MCF 10A (cell line): ENCODE measurements at regions of chr12 and their contacts with region 1.

Region 1: DNA sequence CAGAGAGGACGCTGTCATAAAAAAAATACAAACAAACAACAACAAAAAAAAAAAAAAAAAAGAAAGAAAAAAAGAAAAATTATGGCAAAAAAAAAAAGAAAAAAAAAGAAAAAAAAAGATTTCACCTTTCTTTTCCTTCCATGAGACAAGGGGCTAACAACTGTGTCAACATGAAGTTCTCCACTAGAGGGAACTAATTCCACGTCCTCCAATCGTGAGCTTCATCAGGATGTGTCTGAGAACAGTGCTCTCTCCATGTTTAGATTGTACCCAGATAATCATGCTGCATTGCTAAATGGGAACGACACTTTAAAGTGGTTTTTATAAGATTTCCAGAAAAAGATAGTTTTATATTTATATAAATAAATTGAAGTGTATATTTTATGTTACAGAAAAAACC is 96.2 kb upstream of the PTPRB start:
- DNase-seq: peak; percentile 80
- H3K4me3 Mint-ChIP-seq: no peak overlapping the region
- H3K27ac Mint-ChIP-seq: no peak overlapping the region
- H3K4me1 Mint-ChIP-seq: no peaks in the 10 kb centered on the region
- H3K27me3 Mint-ChIP-seq: no peaks in the 10 kb centered on the region
- CTCF ChIP-seq: peak; percentile 80

Region 2: DNA sequence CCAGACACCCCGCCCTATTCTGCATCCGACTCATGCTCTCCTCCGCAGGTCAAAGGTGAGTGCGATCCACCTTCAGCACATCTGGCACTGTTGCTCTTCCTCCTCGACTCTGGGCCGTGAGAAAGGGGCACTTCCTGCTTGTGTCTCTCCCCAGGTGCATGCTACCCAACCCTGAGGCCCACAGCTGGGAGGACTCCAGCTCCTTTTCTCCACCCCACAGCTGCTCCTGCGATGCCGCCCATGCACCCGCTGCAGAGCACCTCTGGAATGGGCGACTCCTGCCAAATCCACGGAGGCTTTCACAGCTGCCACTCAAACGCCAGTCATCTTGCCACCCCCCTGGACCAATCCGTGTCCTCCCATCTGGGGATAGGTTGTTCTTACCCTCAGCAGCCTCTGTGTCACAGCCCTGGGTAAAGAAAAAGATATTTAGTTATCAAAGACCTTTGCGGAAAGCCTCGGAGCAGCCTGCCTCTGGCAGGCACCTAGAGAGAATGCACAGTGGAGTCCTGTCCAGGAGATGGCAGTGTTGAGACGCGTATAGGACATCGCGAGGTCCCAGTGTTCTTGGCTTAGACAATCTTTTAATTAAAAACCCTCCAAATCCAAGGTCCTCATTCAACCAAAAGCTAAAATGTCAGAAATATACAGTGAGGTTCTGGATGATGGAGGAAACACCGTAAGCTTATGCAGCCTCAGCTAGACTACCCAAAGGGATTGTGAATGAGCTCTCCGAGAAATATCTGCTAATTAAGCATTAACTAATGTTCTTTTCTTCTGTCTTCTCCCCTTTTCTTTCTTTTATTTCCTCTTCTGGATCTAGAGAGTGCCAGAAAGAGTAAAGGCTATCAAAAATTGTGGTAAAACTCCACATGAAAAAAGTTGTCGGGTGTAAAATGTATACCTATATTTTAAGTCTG is 854.1 kb before region 1 on chr12:
- CTCF ChIA-PET with region 1: interaction called, 25 read pairs
- POLR2A ChIA-PET with region 1: interaction called, 3 read pairs
- intact Hi-C with region 1: loop called (anchors 1 kb)
- DNase-seq: peak; percentile 83
- H3K4me3 Mint-ChIP-seq: peak overlapping the region; percentile 60
- H3K27ac Mint-ChIP-seq: no peak overlapping the region
- H3K4me1 Mint-ChIP-seq: peaks cover 7% of the 10 kb centered on the region
- H3K27me3 Mint-ChIP-seq: no peaks in the 10 kb centered on the region
- CTCF ChIP-seq: peak; percentile 94

Region 3: DNA sequence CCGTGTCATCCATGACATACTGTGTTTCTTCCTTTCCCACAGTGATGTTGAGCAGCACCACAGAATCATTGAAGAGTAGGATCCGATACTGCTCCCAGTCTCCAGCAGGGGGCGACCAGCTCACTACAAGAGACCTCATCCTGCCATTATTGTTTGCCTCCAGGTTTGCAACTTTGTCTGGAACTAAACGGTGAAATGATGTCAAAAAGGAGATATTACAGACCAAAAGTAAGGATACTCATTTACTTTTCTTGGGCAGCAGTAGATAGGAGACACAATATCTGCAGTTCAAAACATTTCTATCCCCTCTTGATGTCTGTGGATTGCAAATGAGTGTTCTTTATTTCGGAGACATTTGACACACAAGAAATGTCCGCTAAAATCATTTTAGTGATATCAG is 143.3 kb before region 1 on chr12:
- CTCF ChIA-PET with region 1: interaction called, 23 read pairs
- POLR2A ChIA-PET with region 1: no interaction called
- intact Hi-C with region 1: loop called (anchors 1 kb)
- DNase-seq: peak; percentile 83
- H3K4me3 Mint-ChIP-seq: no peak overlapping the region
- H3K27ac Mint-ChIP-seq: no peak overlapping the region
- H3K4me1 Mint-ChIP-seq: no peaks in the 10 kb centered on the region
- H3K27me3 Mint-ChIP-seq: no peaks in the 10 kb centered on the region
- CTCF ChIP-seq: peak; percentile 78

Region 4: DNA sequence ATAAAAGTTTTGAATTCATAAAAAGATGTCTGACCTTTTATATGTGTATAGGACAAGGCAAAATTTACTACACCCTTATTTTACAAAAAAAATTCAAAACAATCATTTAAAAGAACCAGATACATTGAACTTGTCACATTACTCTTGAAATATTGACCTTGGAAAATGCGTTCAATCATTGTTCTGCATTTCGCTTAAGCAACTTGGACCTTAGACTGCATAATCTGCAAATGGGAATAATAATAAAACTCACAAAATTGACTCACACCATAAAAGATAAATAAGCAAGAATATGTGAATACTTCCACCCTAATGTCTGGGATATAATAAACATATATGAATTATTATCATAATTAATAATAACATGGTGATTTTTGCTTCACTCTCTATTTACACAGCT is 26.8 kb before region 1 on chr12:
- CTCF ChIA-PET with region 1: no interaction called
- POLR2A ChIA-PET with region 1: no interaction called
- intact Hi-C with region 1: no loop called
- DNase-seq: no peak
- H3K4me3 Mint-ChIP-seq: no peak overlapping the region
- H3K27ac Mint-ChIP-seq: no peak overlapping the region
- H3K4me1 Mint-ChIP-seq: no peaks in the 10 kb centered on the region
- H3K27me3 Mint-ChIP-seq: peaks cover 18% of the 10 kb centered on the region
- CTCF ChIP-seq: no peak

Region 5: GRCh38 chr12:70747445-70748160 is 14.2 kb after region 1 on chr12:
- CTCF ChIA-PET with region 1: interaction called, 18 read pairs
- POLR2A ChIA-PET with region 1: no interaction called
- intact Hi-C with region 1: no loop called
- DNase-seq: no peak
- H3K4me3 Mint-ChIP-seq: no peak overlapping the region
- H3K27ac Mint-ChIP-seq: no peak overlapping the region
- H3K4me1 Mint-ChIP-seq: peaks cover 13% of the 10 kb centered on the region
- H3K27me3 Mint-ChIP-seq: no peaks in the 10 kb centered on the region
- CTCF ChIP-seq: no peak

Region 6: DNA sequence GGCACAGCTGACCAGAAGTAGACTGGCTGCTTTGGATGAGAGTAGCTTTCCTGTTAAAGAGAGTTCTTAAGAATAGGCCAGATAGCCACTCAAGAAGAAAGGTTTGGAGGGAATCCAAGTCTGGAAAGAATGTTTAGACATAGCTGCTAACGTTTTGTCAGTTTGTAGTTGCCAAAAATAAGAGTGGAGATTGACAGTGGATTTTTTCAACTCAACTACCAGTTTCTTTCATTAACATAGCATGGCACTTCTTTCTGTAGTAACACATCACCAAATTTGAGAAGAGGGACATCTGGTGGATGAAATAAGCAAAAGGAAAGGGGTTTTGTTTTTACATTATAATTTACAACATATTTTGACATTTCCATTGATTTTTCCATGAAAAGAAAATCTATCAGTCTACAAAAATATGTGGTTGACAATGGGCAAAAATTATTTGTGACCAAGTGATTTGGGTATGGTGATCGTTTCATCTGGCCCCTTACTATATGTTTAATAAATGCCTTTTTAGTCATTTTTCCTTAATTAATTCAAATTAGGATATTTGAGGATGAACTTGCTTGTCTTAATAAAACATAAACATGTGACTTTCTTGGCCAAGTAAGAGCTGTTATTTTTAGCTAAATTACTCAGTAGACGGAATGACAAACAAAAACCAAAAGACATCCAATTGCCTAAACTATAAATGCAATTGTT is 116.0 kb after region 1 on chr12:
- CTCF ChIA-PET with region 1: interaction called, 61 read pairs
- POLR2A ChIA-PET with region 1: interaction called, 12 read pairs
- intact Hi-C with region 1: loop called (anchors 1 kb)
- DNase-seq: peak; percentile 60
- H3K4me3 Mint-ChIP-seq: no peak overlapping the region
- H3K27ac Mint-ChIP-seq: peak overlapping the region; percentile 82
- H3K4me1 Mint-ChIP-seq: peaks cover 35% of the 10 kb centered on the region
- H3K27me3 Mint-ChIP-seq: no peaks in the 10 kb centered on the region
- CTCF ChIP-seq: peak; percentile 30

Region 7: DNA sequence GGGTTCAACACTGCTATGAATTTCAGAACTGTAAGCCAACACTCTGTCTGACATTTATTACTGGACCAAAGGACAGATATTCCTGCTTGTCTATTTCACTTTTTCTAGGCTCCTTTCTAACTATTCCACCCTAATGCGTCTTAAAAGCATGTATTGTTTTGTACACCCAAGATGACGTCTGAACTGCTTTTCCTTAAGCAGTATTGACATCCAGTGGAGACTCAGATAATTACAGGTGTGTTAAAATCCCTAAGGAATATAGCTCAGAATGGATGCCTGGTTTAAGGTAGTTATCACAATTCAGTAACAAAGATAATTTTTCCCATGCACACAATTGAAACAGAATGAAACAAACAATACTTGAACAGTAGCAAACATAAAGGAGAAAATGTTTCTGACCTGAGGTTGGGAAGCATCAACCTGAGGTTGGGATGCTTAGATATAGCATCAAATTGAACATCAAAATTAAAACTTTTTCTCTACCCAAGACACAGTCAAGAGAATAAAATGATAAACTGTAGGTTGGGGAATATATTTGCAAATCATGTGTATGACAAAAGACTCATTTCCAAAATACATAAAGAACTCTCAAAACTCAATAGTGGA is 280.9 kb after region 1 on chr12:
- CTCF ChIA-PET with region 1: interaction called, 106 read pairs
- POLR2A ChIA-PET with region 1: interaction called, 7 read pairs
- intact Hi-C with region 1: loop called (anchors 1 kb)
- DNase-seq: peak; percentile 77
- H3K4me3 Mint-ChIP-seq: peak overlapping the region; percentile 46
- H3K27ac Mint-ChIP-seq: peak overlapping the region; percentile 68
- H3K4me1 Mint-ChIP-seq: peaks cover 11% of the 10 kb centered on the region
- H3K27me3 Mint-ChIP-seq: no peaks in the 10 kb centered on the region
- CTCF ChIP-seq: peak; percentile 81

Region 8: GRCh38 chr12:71392521-71393145 is 659.2 kb after region 1 on chr12:
- CTCF ChIA-PET with region 1: no interaction called
- POLR2A ChIA-PET with region 1: no interaction called
- intact Hi-C with region 1: loop called (anchors 1 kb)
- DNase-seq: peak; percentile 70
- H3K4me3 Mint-ChIP-seq: no peak overlapping the region
- H3K27ac Mint-ChIP-seq: no peak overlapping the region
- H3K4me1 Mint-ChIP-seq: no peaks in the 10 kb centered on the region
- H3K27me3 Mint-ChIP-seq: no peaks in the 10 kb centered on the region
- CTCF ChIP-seq: peak; percentile 67